ENCODE measurements at regions of chr18 and their contacts with region 1.

Region 1: GRCh38 chr18:12092398-12093229 is 1.0 kb upstream of the ANKRD62 start:
- DNase-seq: peak; percentile 61 to 76 (median 76)
- ATAC-seq: peak; percentile 95
- H3K4me3 ChIP-seq: no peak overlapping the region
- H3K4me1 ChIP-seq: no peaks in the 10 kb centered on the region
- CTCF ChIP-seq: peak; percentile 28

Region 2: DNA sequence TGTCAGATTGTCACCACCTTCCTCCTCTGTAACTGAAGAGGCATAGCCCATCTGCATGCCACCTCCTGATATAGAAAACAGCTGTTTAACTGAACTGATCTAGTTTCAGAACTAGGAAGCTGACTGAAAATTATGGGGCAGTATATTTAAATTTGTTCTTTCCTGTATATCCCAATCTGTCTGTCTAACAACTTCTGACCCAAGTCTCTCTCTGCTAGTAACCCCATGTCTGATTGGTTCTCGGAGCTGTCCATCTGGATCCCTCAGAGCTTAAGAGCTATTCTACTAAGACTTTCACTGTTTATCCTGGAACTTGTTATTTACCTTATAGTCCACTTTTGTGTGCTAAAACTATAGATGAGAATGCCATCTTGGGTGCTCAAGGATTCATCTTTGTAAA is 551.4 kb before region 1 on chr18:
- intact Hi-C with region 1: no loop called
- DNase-seq: no peak
- ATAC-seq: no peak
- H3K4me3 ChIP-seq: no peak overlapping the region
- H3K4me1 ChIP-seq: no peaks in the 10 kb centered on the region
- CTCF ChIP-seq: no peak

Region 3: GRCh38 chr18:12246849-12247808 is 154.5 kb after region 1 on chr18:
- intact Hi-C with region 1: loop called in 1 of 2 experiments (anchors 10 kb)
- DNase-seq: peak in 1 of 3 donors; percentile 12
- ATAC-seq: no peak
- H3K4me3 ChIP-seq: no peak overlapping the region
- H3K4me1 ChIP-seq: no peaks in the 10 kb centered on the region
- CTCF ChIP-seq: no peak